Natural killer cell (primary cell): ENCODE measurements at regions of chr2 and their contacts with region 1.

Region 1: DNA sequence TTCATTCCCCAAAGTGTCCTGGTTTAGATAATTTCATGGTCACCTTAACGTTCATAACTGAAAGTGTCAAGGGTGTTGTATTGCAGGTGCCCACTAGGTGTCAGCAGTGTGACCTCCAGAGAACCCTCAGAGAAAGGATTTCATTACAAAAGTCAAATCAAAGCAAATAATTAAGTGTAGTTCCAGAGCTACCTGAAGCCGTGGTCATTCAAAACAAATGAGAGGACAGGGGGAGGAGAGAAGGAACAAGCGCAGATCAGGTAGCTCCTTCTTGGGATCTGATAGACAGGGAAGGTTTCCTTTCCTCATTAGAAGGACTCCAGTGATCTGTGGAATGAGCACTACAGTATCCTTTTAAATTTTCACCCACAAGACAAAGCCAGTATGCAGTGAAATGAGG is at the start of gene SLC9A4:
- DNase-seq: peak; percentile 58 to 72
- ATAC-seq: peak; percentile 67 to 90 (median 86)
- H3K4me3 ChIP-seq: no peak within 1 kb of the TSS
- H3K4me3 Mint-ChIP-seq: no peak within 1 kb of the TSS
- H3K27ac ChIP-seq: no peak within 1 kb of the TSS
- H3K27ac Mint-ChIP-seq: no peak within 1 kb of the TSS
- H3K4me1 ChIP-seq: no peaks in the 10 kb centered on the region
- H3K4me1 Mint-ChIP-seq: no peaks in the 10 kb centered on the region
- H3K27me3 ChIP-seq: peaks cover 4% of the 10 kb centered on the region
- H3K27me3 Mint-ChIP-seq: peaks cover 15 to 19% of the 10 kb centered on the region in 2 donors
- CTCF ChIP-seq: peak; percentile 96
- total RNA-seq, gene SLC9A4: 0.19 to 0.38 TPM in 2 of 3 donors, not detected in the other

Region 2: DNA sequence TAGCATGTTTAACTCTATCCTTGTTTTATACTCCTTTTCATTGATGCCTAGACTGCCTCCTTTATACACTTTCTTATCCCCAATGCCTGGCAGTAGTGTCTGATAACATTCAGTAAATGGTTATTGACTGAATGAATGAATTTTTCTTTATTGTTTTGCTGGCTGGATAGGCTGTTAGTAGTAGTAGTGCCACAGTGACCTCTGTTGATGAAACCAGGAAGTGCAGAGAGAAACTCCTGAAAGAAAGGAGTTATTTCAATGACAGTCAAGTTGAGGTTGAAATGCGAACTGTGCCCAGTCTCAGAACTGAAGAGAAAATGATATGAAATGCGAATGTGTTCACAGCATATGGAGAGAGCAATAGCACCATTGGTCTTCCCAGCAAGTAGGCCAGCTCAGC is 119.6 kb after region 1 on chr2:
- intact Hi-C with region 1: loop called (anchors 1 kb)
- DNase-seq: peak in 1 of 2 donors; percentile 33
- ATAC-seq: peak in 2 of 3 donors; percentile 64 to 72
- H3K4me3 ChIP-seq: no peak overlapping the region
- H3K4me3 Mint-ChIP-seq: no peak overlapping the region
- H3K27ac ChIP-seq: no peak overlapping the region
- H3K27ac Mint-ChIP-seq: no peak overlapping the region
- H3K4me1 ChIP-seq: no peaks in the 10 kb centered on the region
- H3K4me1 Mint-ChIP-seq: peaks cover 28 to 34% of the 10 kb centered on the region in 2 donors
- H3K27me3 ChIP-seq: no peaks in the 10 kb centered on the region
- H3K27me3 Mint-ChIP-seq: peaks cover 0 to 6% of the 10 kb centered on the region in 2 donors
- CTCF ChIP-seq: peak; percentile 83

Region 3: GRCh38 chr2:102615622-102616436 is 142.8 kb after region 1 on chr2:
- intact Hi-C with region 1: loop called (anchors 1 kb)
- DNase-seq: peak; percentile 46 to 61
- ATAC-seq: peak; percentile 89 to 97 (median 93)
- H3K4me3 ChIP-seq: no peak overlapping the region
- H3K4me3 Mint-ChIP-seq: no peak overlapping the region
- H3K27ac ChIP-seq: no peak overlapping the region
- H3K27ac Mint-ChIP-seq: no peak overlapping the region
- H3K4me1 ChIP-seq: peaks cover 14% of the 10 kb centered on the region
- H3K4me1 Mint-ChIP-seq: peaks cover 8 to 15% of the 10 kb centered on the region in 2 donors
- H3K27me3 ChIP-seq: peaks cover 23% of the 10 kb centered on the region
- H3K27me3 Mint-ChIP-seq: peaks cover 37 to 49% of the 10 kb centered on the region in 2 donors
- CTCF ChIP-seq: peak; percentile 94